ENCODE measurements at regions of chr3 and their contacts with region 1.

Region 1: DNA sequence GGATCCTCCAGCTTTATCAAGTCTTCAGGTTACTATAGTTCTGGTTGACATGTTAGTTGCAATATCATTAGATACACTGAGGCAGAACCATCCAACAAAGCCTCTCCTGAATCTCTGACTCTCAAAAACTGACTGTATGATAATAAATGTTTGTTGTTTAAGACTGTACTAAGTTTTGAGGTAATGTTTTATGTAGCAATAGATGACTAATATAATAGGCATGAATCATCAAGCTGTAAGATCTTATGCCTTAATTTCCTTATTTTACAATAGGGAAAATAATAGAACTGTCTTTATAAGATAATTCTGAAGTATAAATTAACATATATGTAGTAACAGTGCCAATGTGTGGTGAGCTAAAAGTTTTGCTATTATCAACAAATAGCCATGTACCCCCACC is 88.9 kb upstream of the TBC1D5 start:
- DNase-seq: no peak
- ATAC-seq: no peak

Region 2: GRCh38 chr3:17645072-17645698 is 186.2 kb before region 1 on chr3:
- intact Hi-C with region 1: loop called (anchors 10 kb)
- DNase-seq: no peak
- ATAC-seq: peak; percentile 86

Region 3: GRCh38 chr3:17742108-17742879 is 89.1 kb before region 1 on chr3 and contains the start of gene TBC1D5:
- intact Hi-C with region 1: no loop called
- DNase-seq: peak; percentile 98
- ATAC-seq: peak; percentile 97
- total RNA-seq, gene TBC1D5: 28.2 TPM

Region 4: GRCh38 chr3:18417904-18418572 is 586.7 kb after region 1 on chr3:
- intact Hi-C with region 1: no loop called
- DNase-seq: no peak
- ATAC-seq: no peak